Activated CD8-positive, alpha-beta T cell treated with anti-CD3 and anti-CD28 coated beads, Interleukin-2, amount 10 ng/mL, durations not matched to agents 7 days and 5 days (primary cell): ENCODE measurements at regions of chr7 and their contacts with region 1.

Region 1: DNA sequence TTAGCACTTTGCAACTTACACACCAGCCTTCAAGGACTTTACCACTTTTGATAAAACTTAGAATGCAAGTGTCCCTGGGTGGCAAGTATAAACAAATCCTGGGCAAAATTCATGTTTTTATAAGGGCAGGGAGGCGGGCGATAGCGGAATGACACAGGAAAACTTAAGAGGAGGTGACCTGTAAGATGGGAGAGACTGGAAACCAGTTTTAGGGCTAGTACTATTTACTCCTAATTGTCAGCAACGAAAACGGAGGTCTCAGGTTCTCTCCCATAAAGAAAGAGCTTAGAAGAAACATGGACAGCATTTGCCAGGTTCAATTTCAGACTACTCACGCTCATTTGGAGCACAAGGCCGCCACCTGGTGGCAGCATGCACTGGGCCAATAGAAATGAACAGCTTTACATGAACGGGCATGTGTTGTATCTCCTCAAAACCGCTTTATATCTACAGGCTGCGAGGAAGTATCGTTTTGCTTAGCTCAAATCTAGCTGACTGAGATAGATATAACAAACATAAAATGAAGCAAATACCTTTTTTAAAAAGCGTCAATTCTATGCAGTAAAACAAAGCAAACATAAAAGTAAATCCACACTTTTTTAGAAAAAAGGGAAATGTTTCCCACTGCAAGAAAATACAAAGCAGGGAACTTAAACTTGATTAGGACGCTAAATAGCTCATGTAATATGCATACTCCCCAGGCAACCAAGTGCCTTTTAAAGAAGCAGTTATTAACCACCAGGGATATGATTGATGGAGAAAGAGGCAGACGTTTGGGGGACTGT is 37.6 kb upstream of the SVOPL start:
- DNase-seq: peak; percentile 90
- ATAC-seq: peak; percentile 97
- H3K4me3 Mint-ChIP-seq: no peak overlapping the region
- H3K27ac Mint-ChIP-seq: peak overlapping the region; percentile 14
- H3K4me1 Mint-ChIP-seq: peaks cover 13% of the 10 kb centered on the region
- H3K27me3 Mint-ChIP-seq: no peaks in the 10 kb centered on the region

Region 2: GRCh38 chr7:138161600-138162081 is 577.1 kb before region 1 on chr7:
- CTCF ChIA-PET with region 1: interaction called, 72 read pairs
- POLR2A ChIA-PET with region 1: interaction called, 6 read pairs
- DNase-seq: peak; percentile 87
- ATAC-seq: peak; percentile 97
- H3K4me3 Mint-ChIP-seq: no peak overlapping the region
- H3K27ac Mint-ChIP-seq: no peak overlapping the region
- H3K4me1 Mint-ChIP-seq: no peaks in the 10 kb centered on the region
- H3K27me3 Mint-ChIP-seq: no peaks in the 10 kb centered on the region

Region 3: DNA sequence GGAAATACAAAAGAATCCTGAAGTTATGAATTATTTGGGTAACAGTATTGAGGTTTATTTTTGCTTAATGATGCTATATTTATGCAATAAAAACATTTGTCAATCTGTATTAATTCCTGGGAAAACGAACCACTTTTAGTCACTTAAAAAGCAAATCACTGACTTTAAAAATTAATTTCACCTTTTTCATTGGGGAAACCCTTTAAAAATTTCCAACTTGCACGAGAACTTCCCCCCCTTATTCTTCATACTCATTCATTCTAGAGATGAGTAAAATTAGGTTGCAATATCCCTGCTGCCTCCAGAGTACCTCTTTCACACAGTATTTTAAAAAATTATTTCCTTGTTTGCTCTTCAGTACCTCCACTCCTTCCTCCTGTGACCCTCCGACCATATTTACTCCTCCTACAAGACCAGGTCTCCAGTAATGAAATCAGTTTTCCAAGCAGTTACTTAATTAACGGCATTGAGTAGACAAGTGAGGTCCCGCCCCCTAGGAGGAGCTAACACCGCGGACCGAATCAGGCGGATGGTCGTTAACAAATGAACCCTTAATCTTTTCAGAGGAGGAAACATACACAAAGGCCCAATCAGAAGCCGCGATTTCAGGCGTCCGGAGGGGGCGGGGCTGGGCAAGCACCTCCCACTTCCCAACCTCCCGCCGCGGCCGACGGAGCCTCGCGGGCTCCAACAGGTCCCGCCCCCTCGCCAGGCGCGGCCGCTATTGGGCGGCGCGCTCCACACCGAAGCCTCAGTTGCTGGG is 279.1 kb before region 1 on chr7:
- CTCF ChIA-PET with region 1: interaction called, 13 read pairs
- POLR2A ChIA-PET with region 1: no interaction called
- DNase-seq: peak; percentile 98
- ATAC-seq: peak; percentile 79
- H3K4me3 Mint-ChIP-seq: peak overlapping the region; percentile 88
- H3K27ac Mint-ChIP-seq: peak overlapping the region; percentile 71
- H3K4me1 Mint-ChIP-seq: peaks cover 20% of the 10 kb centered on the region
- H3K27me3 Mint-ChIP-seq: peaks cover 3% of the 10 kb centered on the region

Region 4: DNA sequence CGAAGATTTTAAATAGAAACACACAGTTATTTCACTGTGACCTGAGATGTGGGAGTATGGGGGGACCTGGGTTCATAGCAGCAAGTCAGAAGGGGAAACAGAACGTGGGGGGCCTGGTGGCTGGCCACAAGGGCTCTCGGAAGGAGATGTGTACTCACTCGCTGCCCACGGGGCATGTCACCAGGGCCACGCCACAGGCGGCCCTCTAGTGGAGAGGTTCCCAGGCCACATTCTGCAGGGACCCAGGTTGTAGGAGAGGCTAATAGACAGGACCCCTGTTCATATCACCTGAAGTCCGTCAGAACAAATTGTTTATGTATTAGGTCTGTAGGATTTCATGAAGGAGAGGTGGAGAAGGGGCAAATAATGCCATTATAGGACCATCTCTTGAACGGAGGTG is 12.5 kb before region 1 on chr7:
- CTCF ChIA-PET with region 1: interaction called, 11 read pairs
- POLR2A ChIA-PET with region 1: no interaction called
- DNase-seq: no peak
- ATAC-seq: no peak
- H3K4me3 Mint-ChIP-seq: no peak overlapping the region
- H3K27ac Mint-ChIP-seq: no peak overlapping the region
- H3K4me1 Mint-ChIP-seq: no peaks in the 10 kb centered on the region
- H3K27me3 Mint-ChIP-seq: no peaks in the 10 kb centered on the region

Region 5: GRCh38 chr7:138814806-138815332 is 76.1 kb after region 1 on chr7:
- CTCF ChIA-PET with region 1: interaction called, 10 read pairs
- POLR2A ChIA-PET with region 1: interaction called, 3 read pairs
- DNase-seq: no peak
- ATAC-seq: no peak
- H3K4me3 Mint-ChIP-seq: no peak overlapping the region
- H3K27ac Mint-ChIP-seq: no peak overlapping the region
- H3K4me1 Mint-ChIP-seq: peaks cover 26% of the 10 kb centered on the region
- H3K27me3 Mint-ChIP-seq: no peaks in the 10 kb centered on the region

Region 6: DNA sequence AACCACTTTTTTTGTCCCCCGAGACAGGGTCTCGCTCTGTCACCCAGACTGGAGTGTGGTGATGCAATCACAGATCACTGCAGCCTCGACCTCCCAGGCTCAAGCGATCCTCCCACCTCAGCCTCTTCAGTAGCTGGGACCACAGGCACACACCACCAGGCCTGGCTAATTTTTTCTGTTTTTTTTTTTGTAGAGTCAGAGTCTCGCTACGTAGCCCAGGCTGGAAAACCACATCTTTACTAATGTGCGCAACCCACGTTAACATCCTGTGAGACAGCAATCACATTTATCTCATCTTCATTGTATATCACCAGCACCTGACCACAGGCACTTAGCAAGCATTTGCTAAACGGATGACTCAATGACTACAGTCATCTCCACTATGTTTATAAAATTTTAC is 137.1 kb after region 1 on chr7:
- CTCF ChIA-PET with region 1: interaction called, 13 read pairs
- POLR2A ChIA-PET with region 1: no interaction called
- DNase-seq: peak; percentile 85
- ATAC-seq: peak; percentile 98
- H3K4me3 Mint-ChIP-seq: peak overlapping the region; percentile 4
- H3K27ac Mint-ChIP-seq: peak overlapping the region; percentile 77
- H3K4me1 Mint-ChIP-seq: peaks cover 18% of the 10 kb centered on the region
- H3K27me3 Mint-ChIP-seq: no peaks in the 10 kb centered on the region

Region 7: GRCh38 chr7:138892815-138893214 is 154.1 kb after region 1 on chr7:
- CTCF ChIA-PET with region 1: no interaction called
- POLR2A ChIA-PET with region 1: no interaction called
- DNase-seq: no peak
- ATAC-seq: no peak
- H3K4me3 Mint-ChIP-seq: no peak overlapping the region
- H3K27ac Mint-ChIP-seq: no peak overlapping the region
- H3K4me1 Mint-ChIP-seq: peaks cover 4% of the 10 kb centered on the region
- H3K27me3 Mint-ChIP-seq: no peaks in the 10 kb centered on the region

Region 8: GRCh38 chr7:139416405-139416804 is 677.7 kb after region 1 on chr7:
- CTCF ChIA-PET with region 1: no interaction called
- POLR2A ChIA-PET with region 1: no interaction called
- DNase-seq: no peak
- ATAC-seq: no peak
- H3K4me3 Mint-ChIP-seq: no peak overlapping the region
- H3K27ac Mint-ChIP-seq: no peak overlapping the region
- H3K4me1 Mint-ChIP-seq: no peaks in the 10 kb centered on the region
- H3K27me3 Mint-ChIP-seq: no peaks in the 10 kb centered on the region